Naive thymus-derived CD4-positive, alpha-beta T cell (primary cell): ENCODE measurements at regions of chr10 and their contacts with region 1.

Region 1: DNA sequence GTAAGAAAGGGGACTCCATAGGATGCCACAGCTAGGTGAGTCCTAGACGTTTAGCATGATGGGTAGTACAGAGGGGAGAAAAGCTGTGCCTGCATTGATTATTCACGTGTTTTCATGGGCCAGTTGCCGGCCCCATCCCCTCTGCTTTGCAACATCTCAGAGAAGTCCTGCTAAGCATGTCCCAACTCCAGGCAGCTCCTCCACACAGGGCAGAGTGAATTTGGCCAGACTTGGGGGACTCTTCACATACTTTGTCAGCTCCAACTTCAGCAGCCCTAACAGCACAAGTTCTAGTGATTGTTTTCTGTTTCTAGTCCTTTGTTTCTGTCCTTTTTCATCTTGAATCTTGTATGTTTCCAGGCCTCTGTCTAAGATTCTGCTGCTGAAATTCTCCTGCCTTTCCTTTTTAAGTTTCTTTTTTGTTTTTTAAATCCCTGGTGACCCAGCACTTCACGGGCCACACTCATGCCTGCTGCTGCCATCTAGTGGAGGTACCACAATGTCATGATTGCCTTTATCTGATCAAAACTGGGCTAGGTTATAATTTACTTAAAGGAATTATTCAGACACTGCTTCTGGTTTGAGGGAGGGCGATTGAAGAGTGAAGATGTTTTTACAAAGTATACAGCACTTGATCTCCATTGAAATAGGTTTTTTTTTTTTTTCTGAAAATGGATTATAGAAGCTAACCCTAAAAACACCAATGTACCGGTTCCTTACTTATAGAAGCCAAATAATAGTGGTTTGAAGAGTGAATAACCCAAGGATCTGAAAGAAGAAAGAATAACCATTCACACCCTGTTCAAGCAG is 276.9 kb downstream of the CSTF2T start:
- DNase-seq: peak in 1 of 9 donors; percentile 9
- ATAC-seq: no peak
- H3K4me3 ChIP-seq: no peak overlapping the region
- H3K4me3 Mint-ChIP-seq: no peak overlapping the region
- H3K27ac ChIP-seq: no peak overlapping the region
- H3K27ac Mint-ChIP-seq: no peak overlapping the region
- H3K4me1 ChIP-seq: no peaks in the 10 kb centered on the region
- H3K4me1 Mint-ChIP-seq: peaks cover 0 to 5% (median 0%) of the 10 kb centered on the region in 7 donors
- H3K27me3 ChIP-seq: no peaks in the 10 kb centered on the region
- H3K27me3 Mint-ChIP-seq: peaks cover 0 to 17% (median 4%) of the 10 kb centered on the region in 5 donors

Region 2: GRCh38 chr10:50988792-50989191 is 433.7 kb before region 1 on chr10:
- CTCF ChIA-PET with region 1: no interaction called
- POLR2A ChIA-PET with region 1: no interaction called
- intact Hi-C with region 1: loop called in 1 of 2 experiments (anchors 5 kb)
- DNase-seq: no peak
- ATAC-seq: no peak
- H3K4me3 ChIP-seq: no peak overlapping the region
- H3K4me3 Mint-ChIP-seq: no peak overlapping the region
- H3K27ac ChIP-seq: no peak overlapping the region
- H3K27ac Mint-ChIP-seq: no peak overlapping the region
- H3K4me1 ChIP-seq: no peaks in the 10 kb centered on the region
- H3K4me1 Mint-ChIP-seq: peaks cover 0 to 20% (median 8%) of the 10 kb centered on the region in 7 donors
- H3K27me3 ChIP-seq: peaks cover 7 to 11% of the 10 kb centered on the region in 2 donors
- H3K27me3 Mint-ChIP-seq: peaks cover 41 to 51% (median 48%) of the 10 kb centered on the region in 5 donors

Region 3: GRCh38 chr10:51001587-51001986 is 420.9 kb before region 1 on chr10:
- CTCF ChIA-PET with region 1: no interaction called
- POLR2A ChIA-PET with region 1: no interaction called
- intact Hi-C with region 1: loop called in 1 of 2 experiments (anchors 5 kb)
- DNase-seq: peak in 4 of 9 donors; percentile 4 to 12 (median 6)
- ATAC-seq: no peak
- H3K4me3 ChIP-seq: no peak overlapping the region
- H3K4me3 Mint-ChIP-seq: no peak overlapping the region
- H3K27ac ChIP-seq: no peak overlapping the region
- H3K27ac Mint-ChIP-seq: no peak overlapping the region
- H3K4me1 ChIP-seq: no peaks in the 10 kb centered on the region
- H3K4me1 Mint-ChIP-seq: no peaks in the 10 kb centered on the region
- H3K27me3 ChIP-seq: no peaks in the 10 kb centered on the region
- H3K27me3 Mint-ChIP-seq: peaks cover 7 to 16% (median 11%) of the 10 kb centered on the region in 5 donors

Region 4: DNA sequence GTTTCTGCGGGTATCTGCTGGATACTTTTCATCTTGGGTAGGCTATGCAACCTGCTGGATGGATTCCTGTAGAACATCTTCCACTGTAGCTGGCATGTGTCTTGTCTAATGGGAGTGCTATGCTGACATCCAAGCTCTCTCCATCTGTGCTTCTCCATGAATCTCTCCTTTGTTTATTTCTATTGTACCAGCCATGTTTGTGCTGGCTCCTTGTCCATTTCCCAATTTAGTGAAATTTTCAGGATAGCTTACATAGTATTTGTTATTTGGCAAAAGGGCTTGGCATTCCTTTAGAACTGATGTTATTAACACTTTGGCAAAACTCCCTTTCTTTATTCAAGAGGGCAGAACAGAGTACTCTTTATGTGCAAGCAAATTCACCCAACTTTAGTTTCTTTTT is 78.9 kb after region 1 on chr10:
- CTCF ChIA-PET with region 1: no interaction called
- POLR2A ChIA-PET with region 1: no interaction called
- intact Hi-C with region 1: no loop called
- DNase-seq: no peak
- ATAC-seq: no peak
- H3K4me3 ChIP-seq: no peak overlapping the region
- H3K4me3 Mint-ChIP-seq: no peak overlapping the region
- H3K27ac ChIP-seq: no peak overlapping the region
- H3K27ac Mint-ChIP-seq: no peak overlapping the region
- H3K4me1 ChIP-seq: no peaks in the 10 kb centered on the region
- H3K4me1 Mint-ChIP-seq: no peaks in the 10 kb centered on the region
- H3K27me3 ChIP-seq: no peaks in the 10 kb centered on the region
- H3K27me3 Mint-ChIP-seq: peaks cover 0 to 7% (median 0%) of the 10 kb centered on the region in 5 donors